ENCODE measurements at regions of chr15 and their contacts with region 1.

Region 1: GRCh38 chr15:51281368-51281967 is 56.9 kb downstream of the CYP19A1 start:
- DNase-seq: peak; percentile 48 to 58 (median 53)
- H3K4me3 ChIP-seq: no peak overlapping the region
- H3K4me3 Mint-ChIP-seq: no peak overlapping the region
- H3K27ac ChIP-seq: no peak overlapping the region
- H3K27ac Mint-ChIP-seq: peak overlapping the region in 1 of 7 donors; percentile 63
- H3K4me1 ChIP-seq: peaks cover 13 to 19% of the 10 kb centered on the region in 2 donors
- H3K4me1 Mint-ChIP-seq: peaks cover 16% of the 10 kb centered on the region
- H3K27me3 ChIP-seq: no peaks in the 10 kb centered on the region
- H3K27me3 Mint-ChIP-seq: peaks cover 5 to 6% (median 6%) of the 10 kb centered on the region in 3 donors
- CTCF ChIP-seq: peak; percentile 75

Region 2: GRCh38 chr15:51380999-51381795 is 99.7 kb after region 1 on chr15:
- intact Hi-C with region 1: loop called (anchors 2 kb)
- DNase-seq: peak; percentile 66 to 79 (median 74)
- H3K4me3 ChIP-seq: no peak overlapping the region
- H3K4me3 Mint-ChIP-seq: no peak overlapping the region
- H3K27ac ChIP-seq: no peak overlapping the region
- H3K27ac Mint-ChIP-seq: no peak overlapping the region
- H3K4me1 ChIP-seq: no peaks in the 10 kb centered on the region
- H3K4me1 Mint-ChIP-seq: peaks cover 3% of the 10 kb centered on the region
- H3K27me3 ChIP-seq: peaks cover 0 to 5% of the 10 kb centered on the region in 2 donors
- H3K27me3 Mint-ChIP-seq: peaks cover 4 to 10% (median 5%) of the 10 kb centered on the region in 3 donors
- CTCF ChIP-seq: peak; percentile 83